Right cardiac atrium (tissue), 5 donors: ENCODE measurements at regions of chr6 and their contacts with region 1.

Region 1: DNA sequence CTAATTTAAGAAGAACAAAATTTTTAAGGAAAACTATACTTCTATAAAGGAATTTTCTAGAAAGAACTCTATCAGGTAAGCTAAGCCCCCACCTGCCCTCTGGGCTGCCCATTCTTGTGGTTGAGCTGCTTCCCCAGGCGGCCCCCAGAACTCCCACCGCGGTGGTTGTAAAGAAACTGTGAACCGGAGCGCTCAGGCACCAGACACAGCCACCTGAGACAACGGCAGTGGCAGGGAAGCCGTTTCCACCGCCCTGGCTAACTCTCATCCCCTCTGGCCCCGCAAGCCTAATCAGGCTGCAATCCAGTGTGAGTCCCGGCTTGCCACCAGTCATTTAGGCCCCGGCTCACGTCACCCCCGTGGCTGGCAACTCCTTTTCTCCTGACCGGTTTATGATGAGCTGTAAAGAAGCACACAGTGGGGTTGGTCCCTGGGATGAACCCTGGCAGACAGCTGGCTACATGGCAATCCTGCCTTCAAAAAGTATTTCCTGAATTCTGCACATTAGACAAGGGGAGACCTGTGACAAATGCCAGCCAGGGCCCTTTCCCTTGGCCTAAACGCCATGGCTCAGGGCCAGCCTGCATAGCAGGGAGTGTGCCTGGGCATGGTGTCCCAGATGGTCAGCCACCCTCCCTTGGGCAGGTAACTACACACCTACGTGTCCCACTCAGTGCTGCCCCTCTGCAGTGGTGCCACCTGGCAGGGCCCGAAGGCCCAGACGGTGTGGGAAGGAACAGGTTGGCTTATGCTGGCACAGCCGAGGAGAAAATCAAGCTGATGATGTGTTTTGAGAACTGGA is 63.8 kb upstream of the GPR31 start:
- DNase-seq: no peak
- ATAC-seq: no peak
- H3K4me3 ChIP-seq: no peak overlapping the region
- H3K27ac ChIP-seq: no peak overlapping the region
- H3K4me1 ChIP-seq: no peaks in the 10 kb centered on the region
- H3K27me3 ChIP-seq: peaks cover 3% of the 10 kb centered on the region

Region 2: GRCh38 chr6:167285077-167285770 is 63.6 kb after region 1 on chr6:
- intact Hi-C with region 1: loop called in 2 of 4 experiments (anchors 10 kb)
- DNase-seq: no peak
- ATAC-seq: no peak
- H3K4me3 ChIP-seq: no peak overlapping the region
- H3K27ac ChIP-seq: no peak overlapping the region
- H3K4me1 ChIP-seq: no peaks in the 10 kb centered on the region
- H3K27me3 ChIP-seq: no peaks in the 10 kb centered on the region